ENCODE measurements at regions of chr3 and their contacts with region 1.

Region 1: DNA sequence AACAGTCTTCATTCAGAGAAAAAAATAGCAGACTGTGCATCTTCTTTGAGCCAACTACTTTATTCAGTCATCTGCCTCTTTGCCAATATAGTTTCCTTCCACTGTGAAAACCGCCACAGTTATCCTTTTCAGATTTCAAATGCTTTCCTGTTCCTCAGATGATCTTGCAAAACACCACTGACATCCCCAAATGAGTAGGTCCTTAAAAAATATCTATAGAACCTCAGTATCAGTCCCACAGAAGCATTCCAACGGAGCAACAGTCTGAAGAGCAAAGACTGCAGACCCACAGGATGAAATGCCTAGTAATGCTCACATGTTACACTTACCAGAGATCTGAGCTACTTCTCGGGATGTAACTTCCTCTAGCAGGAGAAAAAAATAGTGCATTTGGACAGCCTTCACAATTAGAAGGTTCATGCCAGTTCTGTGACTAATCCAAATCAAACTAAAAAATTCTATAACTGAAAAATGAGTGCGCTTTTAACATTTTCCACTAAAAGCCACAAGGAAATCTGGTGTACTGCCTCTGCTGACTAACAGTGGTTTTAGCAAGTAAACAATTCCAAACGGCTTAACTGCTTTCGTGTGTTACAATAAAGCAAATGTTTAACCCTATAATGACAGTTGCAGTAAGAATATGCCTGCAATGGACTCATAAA is at the start of gene ANKRD28:
- DNase-seq: peak; percentile 27
- H3K4me3 Mint-ChIP-seq: peak within 1 kb of the TSS; percentile 88
- H3K27ac Mint-ChIP-seq: peak within 1 kb of the TSS; percentile 99
- H3K4me1 Mint-ChIP-seq: peaks cover 92% of the 10 kb centered on the region
- H3K27me3 Mint-ChIP-seq: no peaks in the 10 kb centered on the region
- total RNA-seq, gene ANKRD28: 39.6 and 42.9 TPM in 2 replicates

Region 2: GRCh38 chr3:15500107-15500724 is 297.6 kb before region 1 on chr3:
- intact Hi-C with region 1: loop called (anchors 5 kb)
- DNase-seq: no peak
- H3K4me3 Mint-ChIP-seq: no peak overlapping the region
- H3K27ac Mint-ChIP-seq: peak overlapping the region; percentile 37
- H3K4me1 Mint-ChIP-seq: peaks cover 38% of the 10 kb centered on the region
- H3K27me3 Mint-ChIP-seq: peaks cover under 1% of the 10 kb centered on the region

Region 3: GRCh38 chr3:15629860-15630597 is 167.7 kb before region 1 on chr3:
- intact Hi-C with region 1: loop called (anchors 1 kb)
- DNase-seq: peak; percentile 69
- H3K4me3 Mint-ChIP-seq: peak overlapping the region; percentile 48
- H3K27ac Mint-ChIP-seq: peak overlapping the region; percentile 62
- H3K4me1 Mint-ChIP-seq: peaks cover 49% of the 10 kb centered on the region
- H3K27me3 Mint-ChIP-seq: no peaks in the 10 kb centered on the region

Region 4: GRCh38 chr3:15647611-15648167 is 150.1 kb before region 1 on chr3:
- intact Hi-C with region 1: loop called (anchors 1 kb)
- DNase-seq: peak; percentile 63
- H3K4me3 Mint-ChIP-seq: peak overlapping the region; percentile 60
- H3K27ac Mint-ChIP-seq: peak overlapping the region; percentile 57
- H3K4me1 Mint-ChIP-seq: peaks cover 52% of the 10 kb centered on the region
- H3K27me3 Mint-ChIP-seq: peaks cover 7% of the 10 kb centered on the region

Region 5: GRCh38 chr3:15768421-15769255 is 29.1 kb before region 1 on chr3:
- intact Hi-C with region 1: loop called (anchors 1 kb)
- DNase-seq: no peak
- H3K4me3 Mint-ChIP-seq: peak overlapping the region; percentile 12
- H3K27ac Mint-ChIP-seq: peak overlapping the region; percentile 75
- H3K4me1 Mint-ChIP-seq: peaks cover 50% of the 10 kb centered on the region
- H3K27me3 Mint-ChIP-seq: no peaks in the 10 kb centered on the region

Region 6: DNA sequence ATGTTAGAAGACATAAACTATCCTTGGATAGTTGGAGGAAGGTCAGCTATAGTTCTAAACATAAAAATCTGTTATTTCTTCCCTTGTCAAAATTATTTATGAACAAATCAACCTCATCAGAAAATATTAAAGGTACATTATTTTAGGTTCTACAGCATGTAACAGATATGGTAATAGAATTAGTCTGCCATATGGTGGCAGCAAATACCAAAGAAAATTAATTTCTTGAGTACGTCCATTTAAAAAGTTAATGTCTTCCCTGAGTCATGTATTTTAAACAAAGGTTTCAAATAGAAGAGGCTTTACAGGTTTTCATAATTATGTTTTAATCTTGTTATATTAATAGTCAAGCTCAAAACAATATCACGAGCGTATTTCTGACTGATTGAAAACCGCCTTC is 17.9 kb after region 1 on chr3:
- intact Hi-C with region 1: loop called (anchors 2 kb)
- DNase-seq: no peak
- H3K4me3 Mint-ChIP-seq: no peak overlapping the region
- H3K27ac Mint-ChIP-seq: no peak overlapping the region
- H3K4me1 Mint-ChIP-seq: peaks cover 57% of the 10 kb centered on the region
- H3K27me3 Mint-ChIP-seq: no peaks in the 10 kb centered on the region